Heart left ventricle (tissue), 16 donors: ENCODE measurements at regions of chr3 and their contacts with region 1.

Region 1: DNA sequence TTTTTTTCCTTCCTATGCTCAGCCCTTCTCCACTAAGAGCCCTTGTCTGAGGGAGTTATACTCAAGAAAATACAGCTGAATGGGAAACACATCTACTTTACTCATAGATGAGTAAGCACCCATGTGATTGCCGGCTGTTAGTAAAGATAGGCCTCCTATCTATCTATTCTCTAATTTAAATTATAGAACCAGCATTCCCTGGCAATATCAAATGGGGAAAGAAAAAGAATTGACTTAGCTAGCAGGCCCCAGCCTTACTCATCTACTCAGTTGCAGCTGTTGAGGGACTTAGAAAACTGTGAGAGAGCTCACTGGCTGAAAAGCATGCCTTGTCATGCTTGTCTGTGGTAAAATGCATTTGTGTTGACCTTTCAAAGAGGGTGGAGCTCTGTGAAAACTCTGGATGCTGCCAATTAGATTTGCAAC is 116.9 kb upstream of the LRRFIP2 start:
- DNase-seq: no peak
- ATAC-seq: peak in 2 of 4 donors; percentile 10 to 39
- H3K4me3 ChIP-seq: no peak overlapping the region
- H3K27ac ChIP-seq: peak overlapping the region in 1 of 12 donors; percentile 34
- H3K4me1 ChIP-seq: peaks cover 0 to 16% (median 1%) of the 10 kb centered on the region in 12 donors
- H3K27me3 ChIP-seq: no peaks in the 10 kb centered on the region
- CTCF ChIP-seq: no peak
- POLR2A ChIP-seq: no peak

Region 2: DNA sequence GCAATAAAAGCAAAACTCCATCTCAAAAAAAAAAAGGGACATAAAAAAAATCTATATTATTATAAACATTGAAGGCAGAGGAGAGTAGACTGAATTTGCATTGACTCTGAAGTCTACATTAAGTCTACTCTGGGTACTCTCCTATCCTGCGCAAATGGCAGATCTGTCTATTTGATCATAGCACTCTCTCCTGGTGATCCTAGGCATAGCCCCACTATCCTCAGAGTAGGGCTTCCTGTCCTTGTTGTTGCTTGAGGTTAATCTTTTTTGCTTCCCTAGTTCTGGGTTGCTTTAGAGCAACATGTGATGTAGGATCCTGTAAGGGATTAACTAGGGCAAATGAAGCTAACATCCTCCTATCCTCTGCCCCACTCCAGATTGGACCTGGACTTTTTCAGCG is 34.8 kb before region 1 on chr3:
- intact Hi-C with region 1: loop called in 1 of 10 experiments (anchors 5 kb)
- DNase-seq: no peak
- ATAC-seq: peak in 2 of 4 donors; percentile 44 to 60
- H3K4me3 ChIP-seq: no peak overlapping the region
- H3K27ac ChIP-seq: no peak overlapping the region
- H3K4me1 ChIP-seq: peaks cover 0 to 38% (median 16%) of the 10 kb centered on the region in 12 donors
- H3K27me3 ChIP-seq: no peaks in the 10 kb centered on the region
- CTCF ChIP-seq: peak in 3 of 12 donors; percentile 8 to 20 (median 8)
- POLR2A ChIP-seq: no peak

Region 3: DNA sequence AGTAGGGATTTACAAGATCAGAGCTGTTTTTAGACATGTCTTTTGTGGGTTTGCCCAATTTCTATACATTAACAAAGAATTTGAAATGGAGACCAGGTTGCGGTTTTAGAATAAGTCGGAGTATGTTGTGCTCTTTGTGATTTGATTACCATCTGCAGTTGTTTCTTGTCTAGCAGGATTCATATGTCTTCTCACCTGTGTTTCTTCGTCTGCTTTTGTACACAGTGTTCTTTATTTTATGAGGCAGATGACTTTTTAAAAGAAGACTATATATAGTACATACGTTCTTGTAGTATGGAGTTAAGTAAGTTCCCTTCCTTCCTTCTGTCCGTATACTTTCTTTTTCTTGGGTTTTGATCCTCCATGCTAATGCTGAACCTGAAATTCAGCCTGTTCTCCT is 58.4 kb after region 1 on chr3:
- intact Hi-C with region 1: loop called in 1 of 10 experiments (anchors 10 kb)
- DNase-seq: no peak
- ATAC-seq: no peak
- H3K4me3 ChIP-seq: no peak overlapping the region
- H3K27ac ChIP-seq: no peak overlapping the region
- H3K4me1 ChIP-seq: peaks cover 0 to 5% (median 0%) of the 10 kb centered on the region in 12 donors
- H3K27me3 ChIP-seq: no peaks in the 10 kb centered on the region
- CTCF ChIP-seq: no peak
- POLR2A ChIP-seq: no peak

Region 4: GRCh38 chr3:37787153-37787867 is 496.0 kb after region 1 on chr3:
- intact Hi-C with region 1: no loop called
- DNase-seq: peak in 1 of 5 donors; percentile 54
- ATAC-seq: peak; percentile 67 to 84 (median 84)
- H3K4me3 ChIP-seq: peak overlapping the region in 2 of 12 donors; percentile 1 to 14
- H3K27ac ChIP-seq: peak overlapping the region in 11 of 12 donors; percentile 18 to 89 (median 73)
- H3K4me1 ChIP-seq: peaks cover 5 to 56% (median 37%) of the 10 kb centered on the region in 12 donors
- H3K27me3 ChIP-seq: no peaks in the 10 kb centered on the region
- CTCF ChIP-seq: no peak
- POLR2A ChIP-seq: no peak